T-cell (primary cell): ENCODE measurements at regions of chr3 and their contacts with region 1.

Region 1: DNA sequence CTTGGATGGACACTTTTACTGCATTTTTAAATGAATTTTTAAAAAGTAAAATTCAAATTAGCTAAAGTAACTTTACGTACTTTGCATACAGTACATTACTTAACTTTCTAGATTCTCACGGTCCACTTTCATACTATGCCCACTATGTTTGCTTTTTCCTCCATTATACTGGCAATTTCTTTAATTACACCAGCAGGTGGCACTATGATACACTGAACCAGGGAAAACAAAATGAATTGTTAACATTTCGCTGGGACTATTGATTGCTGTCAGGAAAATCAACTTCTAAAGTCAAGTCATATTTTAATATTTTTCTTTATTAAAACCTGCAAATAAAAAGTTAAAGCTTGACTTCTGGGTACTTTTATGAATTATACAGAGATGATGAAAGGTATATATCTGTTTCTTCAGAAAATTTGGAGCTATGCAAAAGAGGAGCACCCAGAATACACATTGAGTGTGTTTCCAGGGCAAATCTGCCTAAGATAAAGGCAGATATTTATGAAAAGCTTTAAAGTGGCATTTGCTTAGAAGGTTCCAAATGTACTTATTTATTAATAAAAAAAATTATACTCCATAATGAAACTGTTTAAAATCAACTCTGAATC is 21.8 kb upstream of the POU1F1 start:
- DNase-seq: peak in 1 of 35 experiments; percentile 50
- ATAC-seq: peak; percentile 42 to 60 (median 58)
- H3K4me3 ChIP-seq: no peak overlapping the region
- H3K4me3 Mint-ChIP-seq: no peak overlapping the region
- H3K27ac ChIP-seq: no peak overlapping the region
- H3K27ac Mint-ChIP-seq: no peak overlapping the region
- H3K4me1 ChIP-seq: no peaks in the 10 kb centered on the region
- H3K4me1 Mint-ChIP-seq: peaks cover 0 to 2% (median 0%) of the 10 kb centered on the region in 3 donors
- H3K27me3 ChIP-seq: no peaks in the 10 kb centered on the region
- H3K27me3 Mint-ChIP-seq: no peaks in the 10 kb centered on the region

Region 2: DNA sequence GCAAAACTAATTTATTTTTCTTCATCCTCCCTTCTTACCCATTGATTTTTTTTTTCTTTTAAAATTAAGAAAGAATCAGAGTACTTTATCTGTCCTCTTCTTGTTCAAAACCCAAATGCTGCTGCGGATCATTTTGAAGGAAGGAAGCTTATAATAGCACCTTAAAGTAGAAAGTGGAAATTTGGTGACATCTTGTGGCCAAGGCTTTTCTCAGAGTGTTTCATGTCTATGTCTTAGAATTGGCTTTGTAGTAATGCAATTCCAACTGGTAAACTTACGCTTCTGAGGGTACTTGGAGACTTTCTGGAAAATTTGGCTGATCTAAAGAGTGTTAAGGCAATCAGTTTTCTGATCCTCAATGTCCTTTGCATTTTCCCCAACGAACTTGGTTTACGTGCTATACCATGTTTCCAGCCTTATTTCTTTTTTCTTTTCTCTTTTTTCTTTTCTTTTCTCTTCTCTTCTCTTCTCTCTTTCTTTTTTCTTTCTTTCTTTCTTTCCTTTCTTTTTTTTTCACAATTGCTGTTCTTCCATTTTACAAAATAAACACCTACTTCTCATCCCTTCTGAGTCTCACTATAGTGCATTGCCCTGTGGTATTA is 882.3 kb after region 1 on chr3:
- CTCF ChIA-PET with region 1: interaction called in 1 of 2 experiments, 10 read pairs
- POLR2A ChIA-PET with region 1: no interaction called
- DNase-seq: peak in 18 of 35 experiments; percentile 0 to 66 (median 8)
- ATAC-seq: peak in 2 of 4 experiments; percentile 37 to 66
- H3K4me3 ChIP-seq: no peak overlapping the region
- H3K4me3 Mint-ChIP-seq: no peak overlapping the region
- H3K27ac ChIP-seq: no peak overlapping the region
- H3K27ac Mint-ChIP-seq: no peak overlapping the region
- H3K4me1 ChIP-seq: no peaks in the 10 kb centered on the region
- H3K4me1 Mint-ChIP-seq: peaks cover 3 to 9% (median 7%) of the 10 kb centered on the region in 3 donors
- H3K27me3 ChIP-seq: no peaks in the 10 kb centered on the region
- H3K27me3 Mint-ChIP-seq: no peaks in the 10 kb centered on the region

Region 3: GRCh38 chr3:88534534-88534933 is 1236.3 kb after region 1 on chr3:
- CTCF ChIA-PET with region 1: interaction called in 1 of 2 experiments, 10 read pairs
- POLR2A ChIA-PET with region 1: no interaction called
- DNase-seq: no peak
- ATAC-seq: no peak
- H3K4me3 ChIP-seq: no peak overlapping the region
- H3K4me3 Mint-ChIP-seq: no peak overlapping the region
- H3K27ac ChIP-seq: no peak overlapping the region
- H3K27ac Mint-ChIP-seq: no peak overlapping the region
- H3K4me1 ChIP-seq: no peaks in the 10 kb centered on the region
- H3K4me1 Mint-ChIP-seq: no peaks in the 10 kb centered on the region
- H3K27me3 ChIP-seq: no peaks in the 10 kb centered on the region
- H3K27me3 Mint-ChIP-seq: no peaks in the 10 kb centered on the region